ENCODE measurements at regions of chr16 and their contacts with region 1.

Region 1: GRCh38 chr16:46649928-46650623 is 28.9 kb upstream of the SHCBP1 start:
- DNase-seq: no peak
- ATAC-seq: peak; percentile 16; the same call in 2 of the 3 replicates
- H3K4me3 ChIP-seq: no peak overlapping the region
- H3K27ac ChIP-seq: no peak overlapping the region
- H3K4me1 ChIP-seq: peaks cover 25% of the 10 kb centered on the region
- H3K27me3 ChIP-seq: 0 out of 5 replicates have a peak, but pooled peaks cover 0 to 1% of the 10 kb centered on the region in 2 experiments
- CTCF ChIP-seq: no peak
- EP300 ChIP-seq: no peak
- POLR2A ChIP-seq: no peak
- RAD21 ChIP-seq: no peak

Region 2: DNA sequence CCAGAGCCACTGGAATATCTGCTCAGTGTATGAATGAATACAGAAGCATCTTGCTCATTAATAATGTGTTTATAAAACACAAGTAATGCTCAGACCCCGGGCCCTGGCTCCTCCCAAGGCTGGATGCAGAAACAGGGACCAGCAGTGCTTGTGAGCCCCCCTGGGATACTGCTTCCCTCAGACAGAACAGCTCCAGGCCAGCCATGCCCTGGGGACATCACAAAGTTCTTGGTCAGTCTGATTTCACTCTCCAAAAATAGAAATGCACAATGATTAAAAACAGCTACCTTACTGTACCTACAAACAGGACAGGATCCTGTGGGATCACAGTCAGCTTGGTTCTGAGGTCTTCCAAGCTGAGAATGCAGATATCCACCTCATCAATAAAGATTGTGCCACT is 1437.6 kb after region 1 on chr16:
- CTCF ChIA-PET with region 1: no interaction called
- POLR2A ChIA-PET with region 1: no interaction called
- in situ Hi-C with region 1: no loop called
- intact Hi-C with region 1: loop called (anchors 5 kb)
- DNase-seq: no peak
- ATAC-seq: no peak
- H3K4me3 ChIP-seq: no peak overlapping the region
- H3K27ac ChIP-seq: no peak overlapping the region
- H3K4me1 ChIP-seq: no peaks in the 10 kb centered on the region
- H3K27me3 ChIP-seq: peaks cover 3 to 60% of the 10 kb centered on the region in 2 experiments; a peak in 4 of 5 replicates
- CTCF ChIP-seq: no peak
- EP300 ChIP-seq: no peak
- POLR2A ChIP-seq: no peak
- RAD21 ChIP-seq: no peak